ENCODE measurements at regions of chr21 and their contacts with region 1.

Region 1: GRCh38 chr21:34336756-34337391 is 26.9 kb upstream of the KCNE2 start:
- DNase-seq: no peak
- H3K4me3 ChIP-seq: no peak overlapping the region
- H3K27ac ChIP-seq: peak overlapping the region in 3 of 4 donors; percentile 4 to 55 (median 6)
- H3K4me1 ChIP-seq: peaks cover 0 to 5% (median 0%) of the 10 kb centered on the region in 4 donors
- H3K27me3 ChIP-seq: no peaks in the 10 kb centered on the region
- CTCF ChIP-seq: no peak
- EP300 ChIP-seq: no peak
- POLR2A ChIP-seq: no peak

Region 2: GRCh38 chr21:33042812-33043211 is 1294.1 kb before region 1 on chr21:
- in situ Hi-C with region 1: no loop called
- intact Hi-C with region 1: no loop called
- DNase-seq: no peak
- H3K4me3 ChIP-seq: no peak overlapping the region
- H3K27ac ChIP-seq: no peak overlapping the region
- H3K4me1 ChIP-seq: no peaks in the 10 kb centered on the region
- H3K27me3 ChIP-seq: peaks cover 49% of the 10 kb centered on the region
- CTCF ChIP-seq: no peak
- EP300 ChIP-seq: no peak
- POLR2A ChIP-seq: no peak

Region 3: DNA sequence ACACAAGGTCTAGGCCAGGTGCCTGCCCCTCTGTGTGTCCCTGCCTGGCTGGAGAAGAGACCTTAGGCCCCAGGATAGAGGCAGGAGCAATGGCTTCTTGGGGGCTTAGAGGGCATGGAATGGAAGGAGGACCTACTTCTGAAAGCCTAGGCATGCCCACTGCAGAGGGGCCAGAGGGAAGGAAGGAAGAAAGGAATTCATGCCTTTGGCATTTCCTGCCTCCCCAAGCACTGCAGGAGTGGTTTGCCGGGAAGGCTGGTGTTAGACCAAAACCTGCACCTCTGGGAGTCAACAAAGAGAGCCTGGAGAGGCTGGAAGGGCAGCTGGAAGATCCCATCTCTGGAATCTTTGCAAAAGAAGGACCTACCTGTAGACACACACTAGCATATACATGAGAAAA is 23.8 kb before region 1 on chr21:
- in situ Hi-C with region 1: no loop called
- intact Hi-C with region 1: loop called (anchors 1 kb)
- DNase-seq: no peak
- H3K4me3 ChIP-seq: no peak overlapping the region
- H3K27ac ChIP-seq: no peak overlapping the region
- H3K4me1 ChIP-seq: no peaks in the 10 kb centered on the region
- H3K27me3 ChIP-seq: no peaks in the 10 kb centered on the region
- CTCF ChIP-seq: no peak
- EP300 ChIP-seq: no peak
- POLR2A ChIP-seq: no peak

Measured in transverse colon (tissue), 4 donors.